Mammary epithelial cell (primary cell): ENCODE measurements at regions of chr20 and their contacts with region 1.

Region 1: DNA sequence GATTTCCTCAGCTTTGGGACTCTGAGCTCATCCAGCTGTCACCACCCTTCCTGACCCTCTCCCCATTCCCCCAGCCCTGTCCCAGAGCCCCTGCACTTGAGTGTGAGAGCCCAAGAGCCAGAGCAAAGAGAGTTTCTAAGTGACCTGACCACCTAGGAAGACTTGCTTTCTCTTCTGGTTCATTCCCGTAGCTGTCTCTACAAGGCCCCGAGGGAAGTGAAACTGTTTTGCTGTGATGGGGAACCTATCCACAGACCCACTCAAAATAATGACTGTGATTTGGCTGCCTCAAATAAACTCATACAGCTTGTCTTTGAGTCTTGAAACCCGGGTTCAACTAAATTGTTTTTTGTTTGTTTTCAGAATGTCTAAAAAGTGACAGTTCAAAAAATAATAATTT is 74.6 kb upstream of the XRN2 start:
- DNase-seq: no peak
- H3K4me3 ChIP-seq: no peak overlapping the region
- H3K27ac ChIP-seq: no peak overlapping the region
- H3K4me1 ChIP-seq: peaks cover 3% of the 10 kb centered on the region
- H3K27me3 ChIP-seq: no peaks in the 10 kb centered on the region
- CTCF ChIP-seq: no peak

Region 2: GRCh38 chr20:21182832-21183563 is 45.5 kb before region 1 on chr20:
- CTCF ChIA-PET with region 1: no interaction called
- dilution Hi-C with region 1: loop called (anchors 5 kb)
- in situ Hi-C with region 1: no loop called
- intact Hi-C with region 1: no loop called
- DNase-seq: peak; percentile 72
- H3K4me3 ChIP-seq: no peak overlapping the region
- H3K27ac ChIP-seq: no peak overlapping the region
- H3K4me1 ChIP-seq: peaks cover 23% of the 10 kb centered on the region
- H3K27me3 ChIP-seq: no peaks in the 10 kb centered on the region
- CTCF ChIP-seq: no peak